Ovary (tissue), 10 donors: ENCODE measurements at regions of chr1 and their contacts with region 1.

Region 1: GRCh38 chr1:181014477-181015250 is 8.0 kb downstream of the STX6 start:
- DNase-seq: no peak
- H3K4me3 ChIP-seq: no peak overlapping the region
- H3K27ac ChIP-seq: no peak overlapping the region
- H3K4me1 ChIP-seq: peaks cover 3% of the 10 kb centered on the region
- H3K27me3 ChIP-seq: no peaks in the 10 kb centered on the region
- CTCF ChIP-seq: no peak
- EP300 ChIP-seq: no peak
- POLR2A ChIP-seq: no peak

Region 2: DNA sequence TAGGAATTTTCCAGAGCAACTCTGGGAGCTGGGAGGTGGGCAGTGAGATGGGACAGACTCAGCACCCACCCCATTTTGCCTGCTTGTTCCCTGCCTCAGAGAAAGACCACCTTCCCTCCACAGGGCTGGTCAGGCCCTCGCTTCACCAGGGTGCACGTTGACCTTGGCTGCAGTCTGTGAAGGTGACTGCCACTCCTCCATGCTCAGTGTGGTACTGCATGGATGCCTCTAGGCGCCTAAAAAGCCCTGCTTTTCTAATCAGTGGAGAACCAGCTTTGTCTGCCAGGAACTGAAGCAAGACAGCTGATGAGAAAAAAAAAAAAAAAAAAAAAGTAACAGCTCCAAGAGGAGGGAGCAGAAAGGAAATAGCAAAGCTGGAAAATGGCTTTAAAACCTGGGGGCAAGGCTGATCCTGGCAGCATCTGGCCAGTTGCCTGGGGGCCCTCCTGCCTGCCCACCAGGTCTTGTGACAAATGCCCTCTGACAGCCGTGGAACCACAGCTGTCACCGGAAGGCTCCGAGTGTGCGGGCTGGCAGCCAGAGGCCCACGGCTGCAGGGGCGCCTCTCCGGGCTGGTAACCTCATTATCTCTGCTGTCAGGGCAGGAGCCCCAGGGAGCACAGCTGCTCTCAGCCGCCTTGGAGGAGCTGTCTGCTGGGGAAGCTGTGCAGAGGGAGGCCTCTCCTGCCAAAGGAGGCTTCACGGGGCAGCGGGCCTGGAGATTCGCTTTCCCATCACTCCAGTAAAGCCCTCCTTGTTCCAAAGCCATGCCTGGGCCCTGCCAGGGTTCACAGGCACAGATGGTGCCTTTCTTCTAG is 88.3 kb before region 1 on chr1:
- intact Hi-C with region 1: loop called in 1 of 4 experiments (anchors 10 kb)
- DNase-seq: peak; percentile 56 to 77 (median 72)
- H3K4me3 ChIP-seq: no peak overlapping the region
- H3K27ac ChIP-seq: peak overlapping the region in 1 of 2 donors; percentile 55
- H3K4me1 ChIP-seq: peaks cover 31% of the 10 kb centered on the region
- H3K27me3 ChIP-seq: no peaks in the 10 kb centered on the region
- CTCF ChIP-seq: no peak
- EP300 ChIP-seq: no peak
- POLR2A ChIP-seq: no peak